WTC11 (cell line): ENCODE measurements at regions of chr3 and their contacts with region 1.

Region 1: GRCh38 chr3:112734718-112735350 is 93.9 kb upstream of the CCDC80 start:
- DNase-seq: peak; percentile 78
- ATAC-seq: peak; percentile 96
- H3K4me3 Mint-ChIP-seq: no peak overlapping the region
- H3K27ac Mint-ChIP-seq: no peak overlapping the region; the same call in 1 of the 2 replicates
- H3K4me1 Mint-ChIP-seq: no peaks in the 10 kb centered on the region
- H3K27me3 Mint-ChIP-seq: no peaks in the 10 kb centered on the region
- CTCF ChIP-seq: peak; percentile 81

Region 2: DNA sequence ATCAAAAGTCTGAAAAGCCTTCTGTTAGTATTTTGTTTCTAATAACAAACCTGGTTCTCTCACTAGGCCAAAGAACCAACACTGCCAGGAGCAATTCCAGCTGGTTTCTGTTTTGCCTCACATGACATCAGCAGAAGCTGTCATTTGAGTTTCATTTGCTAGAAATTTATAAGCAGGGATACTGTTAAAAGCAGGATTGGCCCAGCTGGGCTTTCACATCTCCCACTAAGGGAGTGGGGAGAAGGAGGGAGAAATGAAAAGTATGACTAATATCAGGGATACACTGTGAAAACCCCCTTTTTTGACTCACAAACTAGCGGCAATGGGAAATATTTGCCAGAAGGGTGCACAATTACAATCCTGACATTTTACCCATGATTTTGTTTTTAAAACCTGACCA is 99.2 kb before region 1 on chr3:
- CTCF ChIA-PET with region 1: interaction called, 12 read pairs
- POLR2A ChIA-PET with region 1: no interaction called
- DNase-seq: no peak
- ATAC-seq: no peak
- H3K4me3 Mint-ChIP-seq: no peak overlapping the region
- H3K27ac Mint-ChIP-seq: no peak overlapping the region
- H3K4me1 Mint-ChIP-seq: peaks cover 55% of the 10 kb centered on the region
- H3K27me3 Mint-ChIP-seq: no peaks in the 10 kb centered on the region
- CTCF ChIP-seq: no peak

Region 3: GRCh38 chr3:112653209-112653871 is 81.5 kb before region 1 on chr3:
- CTCF ChIA-PET with region 1: interaction called, 66 read pairs
- POLR2A ChIA-PET with region 1: no interaction called
- DNase-seq: no peak
- ATAC-seq: no peak
- H3K4me3 Mint-ChIP-seq: no peak overlapping the region
- H3K27ac Mint-ChIP-seq: no peak overlapping the region
- H3K4me1 Mint-ChIP-seq: peaks cover 3% of the 10 kb centered on the region
- H3K27me3 Mint-ChIP-seq: no peaks in the 10 kb centered on the region
- CTCF ChIP-seq: no peak

Region 4: GRCh38 chr3:112751564-112752512 is 17.0 kb after region 1 on chr3:
- CTCF ChIA-PET with region 1: interaction called, 18 read pairs
- POLR2A ChIA-PET with region 1: no interaction called
- DNase-seq: no peak
- ATAC-seq: peak; percentile 39
- H3K4me3 Mint-ChIP-seq: no peak overlapping the region
- H3K27ac Mint-ChIP-seq: no peak overlapping the region
- H3K4me1 Mint-ChIP-seq: peaks cover 21% of the 10 kb centered on the region
- H3K27me3 Mint-ChIP-seq: no peaks in the 10 kb centered on the region; the same call in 1 of the 2 replicates
- CTCF ChIP-seq: no peak

Region 5: DNA sequence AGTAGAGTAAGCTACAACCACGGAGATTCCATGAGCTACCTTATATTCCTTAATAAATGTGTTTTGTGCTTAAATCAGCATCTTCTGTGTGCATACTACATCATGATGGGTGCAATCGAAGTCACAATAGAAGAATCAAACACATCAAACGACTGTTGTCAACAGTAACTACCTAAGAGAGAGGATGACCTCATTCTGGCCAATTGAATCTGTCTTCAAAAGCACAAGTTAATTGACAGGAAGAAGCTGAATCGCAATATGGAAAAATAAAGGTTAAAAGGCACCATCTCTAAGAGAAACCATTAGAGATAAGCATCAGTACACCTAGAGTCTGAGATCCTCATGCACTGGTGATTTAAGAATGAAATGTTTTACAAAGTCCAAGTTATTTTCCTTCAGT is 72.9 kb after region 1 on chr3:
- CTCF ChIA-PET with region 1: interaction called, 11 read pairs
- POLR2A ChIA-PET with region 1: no interaction called
- DNase-seq: no peak
- ATAC-seq: no peak
- H3K4me3 Mint-ChIP-seq: no peak overlapping the region
- H3K27ac Mint-ChIP-seq: no peak overlapping the region
- H3K4me1 Mint-ChIP-seq: no peaks in the 10 kb centered on the region
- H3K27me3 Mint-ChIP-seq: no peaks in the 10 kb centered on the region
- CTCF ChIP-seq: no peak

Region 6: DNA sequence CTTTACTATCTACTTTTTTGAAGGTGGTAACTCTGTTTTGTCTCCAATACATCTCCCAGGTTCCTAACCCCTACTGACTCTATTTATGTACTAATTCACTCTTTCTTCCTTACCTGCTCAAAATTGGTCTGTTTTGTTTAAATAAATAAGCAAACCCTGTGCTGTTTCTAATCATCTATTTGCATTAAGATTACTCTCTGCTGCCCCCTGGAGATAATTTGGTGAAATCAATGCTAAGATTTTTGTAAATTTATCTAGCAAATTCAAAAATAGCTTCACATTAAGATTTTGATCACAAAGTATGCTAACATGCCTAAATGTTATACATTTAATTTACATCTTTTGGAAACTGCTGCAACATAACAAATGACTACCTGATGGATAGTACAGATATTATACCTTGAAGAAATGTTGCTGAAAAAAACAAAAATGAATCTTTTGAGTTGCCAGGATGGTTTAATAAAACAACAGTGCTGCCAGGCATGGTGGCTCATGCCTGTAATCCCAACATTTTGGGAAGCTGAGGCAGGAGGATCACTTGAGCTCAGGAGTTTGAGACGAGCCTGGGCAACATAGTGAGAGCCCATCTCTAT is 244.5 kb after region 1 on chr3:
- CTCF ChIA-PET with region 1: interaction called, 61 read pairs
- POLR2A ChIA-PET with region 1: no interaction called
- DNase-seq: no peak
- ATAC-seq: no peak
- H3K4me3 Mint-ChIP-seq: no peak overlapping the region
- H3K27ac Mint-ChIP-seq: no peak overlapping the region
- H3K4me1 Mint-ChIP-seq: no peaks in the 10 kb centered on the region
- H3K27me3 Mint-ChIP-seq: no peaks in the 10 kb centered on the region
- CTCF ChIP-seq: peak; percentile 44; the same call in 1 of the 2 replicates

Region 7: DNA sequence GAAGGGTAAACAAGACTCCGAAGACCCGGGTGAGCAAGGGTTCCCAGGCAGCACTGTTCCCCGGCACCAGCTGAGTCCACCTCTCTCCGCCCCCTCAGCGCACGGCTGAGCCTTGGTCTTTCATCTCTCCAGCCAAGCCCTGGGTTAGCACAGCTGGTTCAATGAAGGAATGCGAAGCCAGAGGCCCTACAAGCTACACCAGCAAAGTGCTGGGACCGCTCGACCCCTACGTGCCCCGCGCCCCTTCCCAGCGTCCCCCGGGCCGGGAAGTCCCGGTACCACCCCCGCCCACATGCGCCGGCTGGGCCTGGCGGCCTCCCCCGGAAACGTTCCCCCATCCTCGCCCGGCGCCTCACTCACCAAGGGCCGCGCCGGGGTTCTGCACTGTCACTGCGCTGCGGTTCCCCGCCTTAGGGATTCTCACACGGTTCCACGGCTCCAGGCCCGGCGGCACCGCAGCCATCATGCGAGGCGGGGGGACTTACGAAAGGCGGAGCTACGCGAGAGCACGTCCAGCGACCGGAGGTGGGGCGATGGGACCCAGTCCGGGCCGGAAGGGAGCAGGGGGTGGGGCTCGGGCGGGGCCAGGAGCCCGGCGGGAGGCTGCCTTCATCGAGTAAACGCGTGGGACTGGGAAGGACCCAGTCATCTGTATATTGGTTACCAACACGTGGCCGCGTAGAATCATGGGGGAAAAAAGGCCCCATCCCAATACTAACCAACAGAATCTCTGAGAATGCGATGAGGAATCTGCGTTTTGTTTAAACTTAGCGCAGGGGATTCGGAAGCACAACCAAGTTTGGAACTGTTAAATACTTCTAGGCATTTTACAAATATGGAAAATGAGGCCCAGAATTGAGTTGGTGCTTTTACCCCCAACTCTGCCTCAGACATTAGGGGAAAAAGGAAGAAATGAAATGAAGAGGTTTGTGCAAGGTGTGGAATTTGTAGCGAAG is 284.6 kb after region 1 on chr3:
- CTCF ChIA-PET with region 1: interaction called, 13 read pairs
- POLR2A ChIA-PET with region 1: interaction called, 4 read pairs
- DNase-seq: peak; percentile 85
- ATAC-seq: peak; percentile 95
- H3K4me3 Mint-ChIP-seq: peak overlapping the region; percentile 84
- H3K27ac Mint-ChIP-seq: peak overlapping the region; percentile 94
- H3K4me1 Mint-ChIP-seq: peaks cover 22% of the 10 kb centered on the region
- H3K27me3 Mint-ChIP-seq: peaks cover 11% of the 10 kb centered on the region
- CTCF ChIP-seq: no peak